ENCODE measurements at regions of chr18 and their contacts with region 1.

Region 1: GRCh38 chr18:63949068-63949737 is at the start of gene HMSD:
- DNase-seq: peak; percentile 73
- ATAC-seq: peak; percentile 84
- H3K4me3 Mint-ChIP-seq: peak within 1 kb of the TSS; percentile 57
- H3K27ac Mint-ChIP-seq: peak within 1 kb of the TSS; percentile 11
- H3K4me1 Mint-ChIP-seq: peaks cover 31% of the 10 kb centered on the region
- H3K27me3 Mint-ChIP-seq: peaks cover 31% of the 10 kb centered on the region
- CTCF ChIP-seq: peak; percentile 28
- total RNA-seq, gene HMSD: 1.4 to 1.6 TPM

Region 2: GRCh38 chr18:63924551-63924950 is 24.7 kb before region 1 on chr18:
- CTCF ChIA-PET with region 1: no interaction called
- POLR2A ChIA-PET with region 1: no interaction called
- intact Hi-C with region 1: no loop called
- DNase-seq: no peak
- ATAC-seq: no peak
- H3K4me3 Mint-ChIP-seq: no peak overlapping the region
- H3K27ac Mint-ChIP-seq: no peak overlapping the region
- H3K4me1 Mint-ChIP-seq: no peaks in the 10 kb centered on the region
- H3K27me3 Mint-ChIP-seq: peaks cover 25% of the 10 kb centered on the region
- CTCF ChIP-seq: no peak

Region 3: GRCh38 chr18:63936156-63936931 is 12.9 kb before region 1 on chr18:
- CTCF ChIA-PET with region 1: interaction called, 12 read pairs
- POLR2A ChIA-PET with region 1: no interaction called
- intact Hi-C with region 1: no loop called
- DNase-seq: peak; percentile 78
- ATAC-seq: peak; percentile 97
- H3K4me3 Mint-ChIP-seq: peak overlapping the region; percentile 56
- H3K27ac Mint-ChIP-seq: no peak overlapping the region
- H3K4me1 Mint-ChIP-seq: no peaks in the 10 kb centered on the region
- H3K27me3 Mint-ChIP-seq: peaks cover 13% of the 10 kb centered on the region
- CTCF ChIP-seq: peak; percentile 51

Region 4: DNA sequence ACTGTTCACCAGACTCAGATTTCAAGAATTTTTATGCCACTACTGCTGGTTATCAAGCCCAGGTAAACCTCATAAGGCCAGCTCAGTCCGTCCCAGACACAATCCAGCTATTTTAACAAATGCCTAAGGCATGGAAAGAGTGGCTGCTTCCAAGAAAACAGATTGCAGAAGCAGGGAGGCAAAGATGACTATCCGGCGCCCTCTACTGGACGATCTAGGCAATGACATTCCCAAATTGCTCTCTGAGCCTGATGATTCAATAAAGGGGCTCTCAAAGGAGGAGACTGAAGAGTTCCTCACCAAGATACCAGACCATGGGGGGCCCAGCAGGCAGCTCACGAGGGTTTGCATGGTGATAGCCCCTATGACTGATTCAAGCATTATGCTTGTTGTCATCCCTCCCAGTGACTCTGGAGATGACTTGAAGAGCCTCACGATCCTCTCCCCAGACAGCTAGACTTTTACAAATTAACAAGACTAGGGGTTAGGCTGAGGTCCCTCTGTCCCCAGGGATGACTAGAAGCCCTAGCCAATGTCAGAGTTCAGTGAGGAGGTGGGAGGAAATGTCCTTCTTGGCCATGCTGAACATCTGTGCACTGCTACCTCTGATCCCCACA is 45.7 kb after region 1 on chr18:
- CTCF ChIA-PET with region 1: interaction called, 4 read pairs
- POLR2A ChIA-PET with region 1: no interaction called
- intact Hi-C with region 1: loop called (anchors 5 kb)
- DNase-seq: peak; percentile 57
- ATAC-seq: peak; percentile 13
- H3K4me3 Mint-ChIP-seq: no peak overlapping the region
- H3K27ac Mint-ChIP-seq: no peak overlapping the region
- H3K4me1 Mint-ChIP-seq: peaks cover 2% of the 10 kb centered on the region
- H3K27me3 Mint-ChIP-seq: no peaks in the 10 kb centered on the region
- CTCF ChIP-seq: peak; percentile 90

Measured in activated CD8-positive, alpha-beta T cell treated with anti-CD3 and anti-CD28 coated beads for 36 hours (primary cell).